ENCODE measurements at regions of chr16 and their contacts with region 1.

Region 1: GRCh38 chr16:29738514-29738913 is 7.3 kb downstream of the C16orf54 start:
- DNase-seq: peak in 13 of 14 experiments; percentile 37 to 91 (median 52)
- ATAC-seq: peak; percentile 90
- H3K4me3 ChIP-seq: no peak overlapping the region
- H3K4me3 Mint-ChIP-seq: peak overlapping the region; percentile 43
- H3K27ac ChIP-seq: peak overlapping the region; percentile 60 to 87
- H3K27ac Mint-ChIP-seq: peak overlapping the region; percentile 98
- H3K4me1 ChIP-seq: peaks cover 81% of the 10 kb centered on the region
- H3K4me1 Mint-ChIP-seq: peaks cover 85% of the 10 kb centered on the region
- H3K27me3 ChIP-seq: no peaks in the 10 kb centered on the region
- H3K27me3 Mint-ChIP-seq: no peaks in the 10 kb centered on the region
- CTCF ChIP-seq: no peak

Region 2: DNA sequence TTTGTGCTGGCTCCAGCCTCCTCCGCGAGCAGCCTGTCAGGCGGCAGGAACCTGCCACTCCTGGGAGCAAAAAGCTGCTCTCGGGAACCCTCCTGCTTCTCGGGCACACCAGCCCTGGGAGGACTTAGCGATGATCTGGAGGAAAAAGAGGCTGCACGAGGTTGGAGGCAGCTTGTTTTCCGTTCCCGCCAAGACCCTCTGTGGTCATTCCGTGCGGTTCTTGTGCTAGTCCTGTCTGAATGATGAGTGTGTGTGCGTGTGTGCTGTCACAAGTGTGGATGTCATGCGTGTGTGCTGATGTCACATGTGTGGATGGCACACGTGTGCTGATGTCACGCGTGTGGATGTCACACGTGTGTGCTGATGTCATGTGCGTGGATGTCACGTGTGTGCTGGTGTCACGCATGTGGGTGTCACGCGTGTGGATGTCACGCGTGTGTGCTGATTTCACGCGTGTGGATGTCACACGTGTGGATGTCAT is 482.0 kb before region 1 on chr16:
- CTCF ChIA-PET with region 1: no interaction called
- POLR2A ChIA-PET with region 1: no interaction called
- intact Hi-C with region 1: no loop called
- DNase-seq: no peak
- ATAC-seq: no peak
- H3K4me3 ChIP-seq: no peak overlapping the region
- H3K4me3 Mint-ChIP-seq: no peak overlapping the region
- H3K27ac ChIP-seq: no peak overlapping the region
- H3K27ac Mint-ChIP-seq: no peak overlapping the region
- H3K4me1 ChIP-seq: peaks cover 7% of the 10 kb centered on the region
- H3K4me1 Mint-ChIP-seq: peaks cover 21% of the 10 kb centered on the region
- H3K27me3 ChIP-seq: no peaks in the 10 kb centered on the region
- H3K27me3 Mint-ChIP-seq: no peaks in the 10 kb centered on the region
- CTCF ChIP-seq: no peak

Region 3: GRCh38 chr16:29757950-29758466 is 19.5 kb after region 1 on chr16:
- CTCF ChIA-PET with region 1: interaction called, 3 read pairs
- POLR2A ChIA-PET with region 1: interaction called, 9 read pairs
- intact Hi-C with region 1: loop called in 1 of 2 experiments (anchors 2 kb)
- DNase-seq: no peak
- ATAC-seq: no peak
- H3K4me3 ChIP-seq: no peak overlapping the region
- H3K4me3 Mint-ChIP-seq: no peak overlapping the region
- H3K27ac ChIP-seq: no peak overlapping the region
- H3K27ac Mint-ChIP-seq: peak overlapping the region; percentile 80
- H3K4me1 ChIP-seq: peaks cover 49% of the 10 kb centered on the region
- H3K4me1 Mint-ChIP-seq: peaks cover 47% of the 10 kb centered on the region
- H3K27me3 ChIP-seq: no peaks in the 10 kb centered on the region
- H3K27me3 Mint-ChIP-seq: no peaks in the 10 kb centered on the region
- CTCF ChIP-seq: no peak

Region 4: GRCh38 chr16:29784901-29785500 is 46.5 kb after region 1 on chr16:
- CTCF ChIA-PET with region 1: interaction called, 21 read pairs
- POLR2A ChIA-PET with region 1: interaction called, 58 read pairs
- intact Hi-C with region 1: loop called in 1 of 2 experiments (anchors 2 kb)
- DNase-seq: peak; percentile 55 to 87 (median 74)
- ATAC-seq: peak; percentile 91
- H3K4me3 ChIP-seq: peak overlapping the region; percentile 40
- H3K4me3 Mint-ChIP-seq: peak overlapping the region; percentile 80
- H3K27ac ChIP-seq: no peak overlapping the region
- H3K27ac Mint-ChIP-seq: peak overlapping the region; percentile 18
- H3K4me1 ChIP-seq: peaks cover 25% of the 10 kb centered on the region
- H3K4me1 Mint-ChIP-seq: peaks cover 33% of the 10 kb centered on the region
- H3K27me3 ChIP-seq: no peaks in the 10 kb centered on the region
- H3K27me3 Mint-ChIP-seq: no peaks in the 10 kb centered on the region
- CTCF ChIP-seq: peak; percentile 85

Region 5: GRCh38 chr16:29790183-29790952 is 51.9 kb after region 1 on chr16 and contains the start of gene KIF22:
- CTCF ChIA-PET with region 1: interaction called, 21 read pairs
- POLR2A ChIA-PET with region 1: interaction called, 58 read pairs
- intact Hi-C with region 1: loop called in 1 of 2 experiments (anchors 2 kb)
- DNase-seq: peak; percentile 99 to 100 (median 100)
- ATAC-seq: peak; percentile 90
- H3K4me3 ChIP-seq: peak within 1 kb of the TSS; percentile 93
- H3K4me3 Mint-ChIP-seq: peak within 1 kb of the TSS; percentile 96
- H3K27ac ChIP-seq: peak within 1 kb of the TSS; percentile 82 to 83
- H3K27ac Mint-ChIP-seq: peak within 1 kb of the TSS; percentile 97
- H3K4me1 ChIP-seq: peaks cover 43% of the 10 kb centered on the region
- H3K4me1 Mint-ChIP-seq: peaks cover 51% of the 10 kb centered on the region
- H3K27me3 ChIP-seq: no peaks in the 10 kb centered on the region
- H3K27me3 Mint-ChIP-seq: no peaks in the 10 kb centered on the region
- CTCF ChIP-seq: peak; percentile 80
- total RNA-seq, gene KIF22: 99.0 to 101 TPM

Region 6: GRCh38 chr16:29815793-29816693 is 77.5 kb after region 1 on chr16 and contains the start of gene PAGR1:
- CTCF ChIA-PET with region 1: interaction called, 4 read pairs
- POLR2A ChIA-PET with region 1: interaction called, 10 read pairs
- intact Hi-C with region 1: no loop called
- DNase-seq: peak; percentile 97 to 100 (median 98)
- ATAC-seq: peak; percentile 73
- H3K4me3 ChIP-seq: peak within 1 kb of the TSS; percentile 95
- H3K4me3 Mint-ChIP-seq: peak within 1 kb of the TSS; percentile 97
- H3K27ac ChIP-seq: peak within 1 kb of the TSS; percentile 84 to 94
- H3K27ac Mint-ChIP-seq: peak within 1 kb of the TSS; percentile 90
- H3K4me1 ChIP-seq: peaks cover 92% of the 10 kb centered on the region
- H3K4me1 Mint-ChIP-seq: peaks cover 83% of the 10 kb centered on the region
- H3K27me3 ChIP-seq: no peaks in the 10 kb centered on the region
- H3K27me3 Mint-ChIP-seq: no peaks in the 10 kb centered on the region
- CTCF ChIP-seq: peak; percentile 97
- total RNA-seq, gene PAGR1: 20.3 TPM

Region 7: GRCh38 chr16:30395992-30396585 is 657.6 kb after region 1 on chr16:
- CTCF ChIA-PET with region 1: no interaction called
- POLR2A ChIA-PET with region 1: no interaction called
- intact Hi-C with region 1: no loop called
- DNase-seq: no peak
- ATAC-seq: no peak
- H3K4me3 ChIP-seq: peak overlapping the region; percentile 86
- H3K4me3 Mint-ChIP-seq: peak overlapping the region; percentile 82
- H3K27ac ChIP-seq: peak overlapping the region; percentile 5 to 56
- H3K27ac Mint-ChIP-seq: peak overlapping the region; percentile 34
- H3K4me1 ChIP-seq: peaks cover 53% of the 10 kb centered on the region
- H3K4me1 Mint-ChIP-seq: peaks cover 47% of the 10 kb centered on the region
- H3K27me3 ChIP-seq: no peaks in the 10 kb centered on the region
- H3K27me3 Mint-ChIP-seq: no peaks in the 10 kb centered on the region
- CTCF ChIP-seq: no peak